CD8-positive, alpha-beta memory T cell (primary cell): ENCODE measurements at regions of chr19 and their contacts with region 1.

Region 1: GRCh38 chr19:54448774-54449700 is at the start of gene LENG8:
- DNase-seq: peak; percentile 96 to 99 (median 99)
- H3K4me3 ChIP-seq: peak within 1 kb of the TSS; percentile 94
- H3K4me3 Mint-ChIP-seq: peak within 1 kb of the TSS; percentile 93 to 99 (median 97)
- H3K27ac ChIP-seq: peak within 1 kb of the TSS; percentile 97
- H3K27ac Mint-ChIP-seq: peak within 1 kb of the TSS; percentile 98 to 100 (median 100)
- H3K4me1 ChIP-seq: peaks cover 37% of the 10 kb centered on the region
- H3K4me1 Mint-ChIP-seq: peaks cover 43 to 68% (median 54%) of the 10 kb centered on the region in 3 donors
- H3K27me3 ChIP-seq: no peaks in the 10 kb centered on the region
- H3K27me3 Mint-ChIP-seq: peaks cover 0 to 11% of the 10 kb centered on the region in 2 donors
- total RNA-seq, gene LENG8: 132 to 144 TPM

Region 2: DNA sequence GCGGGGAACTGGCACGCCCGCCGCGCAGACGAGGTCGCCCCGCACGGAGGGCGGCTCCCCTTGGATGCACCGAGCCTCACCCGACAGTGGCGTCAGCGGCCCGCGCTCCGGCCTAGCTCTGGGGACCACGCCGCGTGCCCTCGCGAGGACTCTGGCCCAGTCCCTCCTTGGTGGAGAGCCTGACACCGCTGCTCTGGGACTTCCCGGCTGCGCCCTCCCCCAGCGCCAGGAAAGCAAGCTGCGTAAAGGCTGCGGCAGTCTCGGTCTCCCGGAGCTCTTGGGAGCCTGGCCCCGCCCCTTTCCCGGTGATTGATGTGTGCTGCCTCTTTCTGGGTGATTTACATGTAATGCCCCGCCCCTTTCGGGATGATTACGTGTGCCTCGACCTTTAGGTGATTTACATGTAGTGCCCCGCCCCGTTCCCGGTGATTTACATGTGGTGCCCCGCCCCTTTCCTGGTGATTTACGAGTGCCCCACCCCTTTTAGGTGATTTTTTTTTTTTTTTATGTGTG is 14.6 kb after region 1 on chr19 and contains the start of gene LENG9:
- CTCF ChIA-PET with region 1: interaction called, 9 read pairs
- POLR2A ChIA-PET with region 1: interaction called, 35 read pairs
- DNase-seq: peak; percentile 88 to 95 (median 92)
- H3K4me3 ChIP-seq: peak within 1 kb of the TSS; percentile 91
- H3K4me3 Mint-ChIP-seq: peak within 1 kb of the TSS; percentile 87 to 99 (median 93)
- H3K27ac ChIP-seq: peak within 1 kb of the TSS; percentile 76
- H3K27ac Mint-ChIP-seq: peak within 1 kb of the TSS; percentile 94 to 99 (median 96)
- H3K4me1 ChIP-seq: peaks cover 21% of the 10 kb centered on the region
- H3K4me1 Mint-ChIP-seq: peaks cover 26 to 43% (median 28%) of the 10 kb centered on the region in 3 donors
- H3K27me3 ChIP-seq: no peaks in the 10 kb centered on the region
- H3K27me3 Mint-ChIP-seq: peaks cover 0 to 4% of the 10 kb centered on the region in 2 donors
- total RNA-seq, gene LENG9: 3.8 to 4.4 TPM